GM12878 (cell line): ENCODE measurements at regions of chr9 and their contacts with region 1.

Region 1: GRCh38 chr9:127869310-127870152 is 7.9 kb downstream of the AK1 start:
- DNase-seq: no peak
- ATAC-seq: peak; percentile 96
- H3K4me3 ChIP-seq: no peak overlapping the region
- H3K27ac ChIP-seq: no peak overlapping the region
- H3K4me1 ChIP-seq: peaks cover 22% of the 10 kb centered on the region
- H3K27me3 ChIP-seq: no peaks in the 10 kb centered on the region
- CTCF ChIP-seq: peak; percentile 87 to 98 (median 91)
- EP300 ChIP-seq: no peak
- POLR2A ChIP-seq: no peak
- RAD21 ChIP-seq: peak; percentile 99

Region 2: GRCh38 chr9:127586537-127586936 is 283.0 kb before region 1 on chr9:
- CTCF ChIA-PET with region 1: interaction called, 16 read pairs
- POLR2A ChIA-PET with region 1: no interaction called
- RAD21 ChIA-PET with region 1: interaction called, 18 read pairs
- SMC1A ChIA-PET with region 1: interaction called, 20 read pairs
- in situ Hi-C with region 1: no loop called
- intact Hi-C with region 1: loop called (anchors 1 kb)
- DNase-seq: no peak
- ATAC-seq: peak; percentile 91
- H3K4me3 ChIP-seq: no peak overlapping the region
- H3K27ac ChIP-seq: no peak overlapping the region
- H3K4me1 ChIP-seq: no peaks in the 10 kb centered on the region; the same call in 1 of the 2 replicates
- H3K27me3 ChIP-seq: no peaks in the 10 kb centered on the region
- CTCF ChIP-seq: peak; percentile 77 to 91 (median 85)
- EP300 ChIP-seq: no peak
- POLR2A ChIP-seq: no peak
- RAD21 ChIP-seq: peak; percentile 86

Region 3: GRCh38 chr9:127770905-127771569 is 98.5 kb before region 1 on chr9:
- CTCF ChIA-PET with region 1: interaction called, 23 read pairs
- POLR2A ChIA-PET with region 1: interaction called, 7 read pairs
- RAD21 ChIA-PET with region 1: interaction called, 9 read pairs
- SMC1A ChIA-PET with region 1: interaction called, 7 read pairs
- in situ Hi-C with region 1: no loop called
- intact Hi-C with region 1: no loop called
- DNase-seq: peak; percentile 90
- ATAC-seq: peak; percentile 95
- H3K4me3 ChIP-seq: peak overlapping the region; percentile 79
- H3K27ac ChIP-seq: peak overlapping the region; percentile 23; the same call in 1 of the 2 replicates
- H3K4me1 ChIP-seq: peaks cover 24% of the 10 kb centered on the region
- H3K27me3 ChIP-seq: no peaks in the 10 kb centered on the region
- CTCF ChIP-seq: no peak
- EP300 ChIP-seq: no peak
- POLR2A ChIP-seq: peak; percentile 78
- RAD21 ChIP-seq: no peak

Region 4: GRCh38 chr9:127785023-127785932 is 84.3 kb before region 1 on chr9:
- CTCF ChIA-PET with region 1: interaction called, 23 read pairs
- POLR2A ChIA-PET with region 1: interaction called, 5 read pairs
- RAD21 ChIA-PET with region 1: interaction called, 16 read pairs
- SMC1A ChIA-PET with region 1: interaction called, 11 read pairs
- in situ Hi-C with region 1: no loop called
- intact Hi-C with region 1: loop called (anchors 5 kb)
- DNase-seq: no peak
- ATAC-seq: peak; percentile 59
- H3K4me3 ChIP-seq: peak overlapping the region; percentile 85
- H3K27ac ChIP-seq: peak overlapping the region; percentile 82
- H3K4me1 ChIP-seq: peaks cover 41% of the 10 kb centered on the region
- H3K27me3 ChIP-seq: no peaks in the 10 kb centered on the region
- CTCF ChIP-seq: peak; percentile 65 to 89 (median 82)
- EP300 ChIP-seq: no peak
- POLR2A ChIP-seq: peak; percentile 44
- RAD21 ChIP-seq: peak; percentile 78

Region 5: GRCh38 chr9:127910613-127911205 is 41.2 kb after region 1 on chr9:
- CTCF ChIA-PET with region 1: interaction called, 91 read pairs
- POLR2A ChIA-PET with region 1: interaction called, 3 read pairs
- RAD21 ChIA-PET with region 1: interaction called, 18 read pairs
- SMC1A ChIA-PET with region 1: interaction called, 9 read pairs
- in situ Hi-C with region 1: no loop called
- intact Hi-C with region 1: no loop called
- DNase-seq: no peak
- ATAC-seq: no peak
- H3K4me3 ChIP-seq: peak overlapping the region; percentile 35; the same call in 1 of the 2 replicates
- H3K27ac ChIP-seq: peak overlapping the region; percentile 86
- H3K4me1 ChIP-seq: peaks cover 54% of the 10 kb centered on the region
- H3K27me3 ChIP-seq: no peaks in the 10 kb centered on the region
- CTCF ChIP-seq: peak; percentile 20 to 49 (median 33); a peak in 4 of 6 replicates
- EP300 ChIP-seq: no peak
- POLR2A ChIP-seq: no peak
- RAD21 ChIP-seq: peak; percentile 41; the same call in 1 of the 2 replicates